Activated CD4-positive, alpha-beta T cell treated with anti-CD3 and anti-CD28 coated beads for 36 hours (primary cell): ENCODE measurements at regions of chr15 and their contacts with region 1.

Region 1: DNA sequence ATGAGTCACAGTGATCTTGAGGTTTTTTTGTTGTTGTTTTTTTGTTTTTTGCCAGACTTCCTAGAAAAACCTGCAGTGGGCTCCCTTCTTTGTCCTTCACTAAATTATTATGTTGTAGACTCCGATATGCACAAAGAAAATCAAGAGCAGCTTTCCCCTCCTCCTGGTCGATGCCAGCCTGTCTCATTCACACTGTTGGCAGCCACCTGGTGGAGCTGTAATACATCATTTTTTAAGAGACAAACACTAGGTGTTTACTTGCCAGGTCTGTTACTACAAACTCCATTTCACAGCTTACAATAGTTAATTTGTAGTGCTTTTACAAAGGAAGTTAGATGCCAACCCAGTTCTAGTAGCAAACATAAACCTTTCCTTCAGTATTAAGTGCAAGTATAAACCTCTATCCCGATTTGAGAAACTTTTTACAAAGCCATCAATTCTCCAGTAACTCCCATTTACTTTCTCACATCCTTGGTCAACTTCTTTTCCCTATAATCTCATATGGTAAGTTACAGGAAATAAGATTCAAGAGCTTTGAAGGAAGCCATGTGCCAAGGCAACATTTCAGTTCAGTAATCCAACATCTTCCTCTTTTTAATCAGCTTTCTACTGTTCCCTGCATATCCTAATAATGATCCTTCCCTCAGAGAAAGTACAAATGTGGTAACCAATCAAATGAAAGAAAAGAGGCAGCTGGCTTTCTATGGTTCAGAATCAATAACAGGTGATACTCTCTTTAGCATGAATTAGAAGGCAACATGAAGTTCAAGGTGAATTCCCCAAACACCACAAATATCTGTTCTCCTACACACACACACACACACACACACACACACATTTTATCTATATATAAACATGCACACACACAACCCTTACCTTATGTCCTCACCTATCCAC is 14.0 kb downstream of the AAGAB start:
- DNase-seq: peak; percentile 48
- ATAC-seq: peak; percentile 45
- H3K4me3 Mint-ChIP-seq: peak overlapping the region; percentile 17
- H3K27ac Mint-ChIP-seq: peak overlapping the region; percentile 89
- H3K4me1 Mint-ChIP-seq: peaks cover 49% of the 10 kb centered on the region
- H3K27me3 Mint-ChIP-seq: no peaks in the 10 kb centered on the region

Region 2: GRCh38 chr15:67033571-67034044 is 206.9 kb before region 1 on chr15:
- CTCF ChIA-PET with region 1: no interaction called
- POLR2A ChIA-PET with region 1: no interaction called
- intact Hi-C with region 1: loop called (anchors 5 kb)
- DNase-seq: peak; percentile 48
- ATAC-seq: peak; percentile 47
- H3K4me3 Mint-ChIP-seq: no peak overlapping the region
- H3K27ac Mint-ChIP-seq: peak overlapping the region; percentile 5
- H3K4me1 Mint-ChIP-seq: peaks cover 13% of the 10 kb centered on the region
- H3K27me3 Mint-ChIP-seq: peaks cover 2% of the 10 kb centered on the region

Region 3: GRCh38 chr15:67085818-67086636 is 154.5 kb before region 1 on chr15:
- CTCF ChIA-PET with region 1: interaction called, 3 read pairs
- POLR2A ChIA-PET with region 1: no interaction called
- intact Hi-C with region 1: loop called (anchors 1 kb)
- DNase-seq: peak; percentile 53
- ATAC-seq: peak; percentile 40
- H3K4me3 Mint-ChIP-seq: peak overlapping the region; percentile 52
- H3K27ac Mint-ChIP-seq: peak overlapping the region; percentile 82
- H3K4me1 Mint-ChIP-seq: peaks cover 97% of the 10 kb centered on the region
- H3K27me3 Mint-ChIP-seq: no peaks in the 10 kb centered on the region

Region 4: DNA sequence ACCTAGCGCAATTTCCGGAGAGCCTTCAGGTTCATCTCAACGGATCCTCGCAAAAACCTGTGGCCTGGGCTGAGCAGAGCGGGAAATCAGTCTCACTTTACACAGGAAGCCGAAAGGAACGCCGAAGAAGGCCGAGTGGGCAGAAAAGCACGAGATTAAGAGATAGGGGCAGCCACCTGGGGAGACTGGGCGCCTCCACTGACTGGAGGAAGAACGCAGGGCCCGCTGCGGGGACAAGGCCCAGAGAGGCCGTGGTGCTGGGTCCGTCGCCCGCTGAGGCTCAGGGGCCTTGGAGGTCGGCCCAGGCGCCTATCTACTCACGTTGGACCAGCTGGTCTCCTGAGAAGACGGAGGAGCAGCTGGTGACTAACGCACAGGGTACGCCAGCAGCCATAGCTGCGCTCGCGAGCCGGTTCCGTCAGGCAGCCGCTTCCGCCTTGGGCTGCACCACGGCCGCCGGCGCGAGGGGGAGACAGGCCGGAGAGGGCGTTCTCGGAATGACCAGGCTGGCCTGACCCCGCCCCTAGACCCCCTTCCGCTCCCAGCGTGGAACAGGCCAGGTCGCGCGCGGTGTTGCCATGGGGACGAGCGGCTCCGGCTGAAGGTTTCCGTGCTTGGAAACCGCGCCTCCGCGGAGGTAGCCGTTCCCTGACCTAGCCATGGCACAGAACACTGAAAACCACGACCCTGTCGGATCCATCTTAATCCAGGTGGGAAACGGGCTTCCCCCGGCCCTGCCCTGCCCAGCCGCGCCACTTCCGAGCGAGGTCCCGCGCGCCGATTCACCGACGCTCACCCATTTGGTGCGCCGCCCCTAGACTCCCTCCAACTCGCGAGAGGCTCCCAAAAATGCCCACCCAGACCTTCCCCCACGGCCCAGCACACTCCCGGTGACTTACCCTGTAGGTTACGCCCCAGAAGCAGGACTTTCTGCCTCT is 14.0 kb after region 1 on chr15 and contains the starts of genes AAGAB and IQCH:
- CTCF ChIA-PET with region 1: interaction called, 15 read pairs
- POLR2A ChIA-PET with region 1: no interaction called
- intact Hi-C with region 1: loop called (anchors 1 kb)
- DNase-seq: peak; percentile 98
- ATAC-seq: peak; percentile 93
- H3K4me3 Mint-ChIP-seq: peak within 1 kb of the TSS; percentile 100
- H3K27ac Mint-ChIP-seq: peak within 1 kb of the TSS; percentile 99
- H3K4me1 Mint-ChIP-seq: peaks cover 37% of the 10 kb centered on the region
- H3K27me3 Mint-ChIP-seq: no peaks in the 10 kb centered on the region
- total RNA-seq, gene AAGAB: 43.9 to 48.6 TPM
- total RNA-seq, gene IQCH: 1.8 to 2.1 TPM

Region 5: GRCh38 chr15:67542420-67543347 is 302.2 kb after region 1 on chr15 and contains the start of gene MAP2K5:
- CTCF ChIA-PET with region 1: no interaction called
- POLR2A ChIA-PET with region 1: no interaction called
- intact Hi-C with region 1: loop called in 1 of 2 experiments (anchors 2 kb)
- DNase-seq: peak; percentile 90
- ATAC-seq: peak; percentile 70
- H3K4me3 Mint-ChIP-seq: peak within 1 kb of the TSS; percentile 82
- H3K27ac Mint-ChIP-seq: peak within 1 kb of the TSS; percentile 95
- H3K4me1 Mint-ChIP-seq: peaks cover 43% of the 10 kb centered on the region
- H3K27me3 Mint-ChIP-seq: no peaks in the 10 kb centered on the region
- total RNA-seq, gene MAP2K5: 18.0 to 26.7 TPM

Region 6: GRCh38 chr15:67746022-67746421 is 505.5 kb after region 1 on chr15:
- CTCF ChIA-PET with region 1: no interaction called
- POLR2A ChIA-PET with region 1: no interaction called
- intact Hi-C with region 1: loop called in 1 of 2 experiments (anchors 10 kb)
- DNase-seq: no peak
- ATAC-seq: peak; percentile 63
- H3K4me3 Mint-ChIP-seq: no peak overlapping the region
- H3K27ac Mint-ChIP-seq: peak overlapping the region; percentile 78
- H3K4me1 Mint-ChIP-seq: peaks cover 55% of the 10 kb centered on the region
- H3K27me3 Mint-ChIP-seq: no peaks in the 10 kb centered on the region